SK-N-SH (cell line): ENCODE measurements at regions of chr15 and their contacts with region 1.

Region 1: GRCh38 chr15:77496710-77497103 is 76.0 kb downstream of the HMG20A start:
- DNase-seq: peak; percentile 81
- H3K4me3 ChIP-seq: peak overlapping the region; percentile 15 to 54; a peak in 2 of 4 replicates
- H3K27ac ChIP-seq: peak overlapping the region; percentile 75 to 98
- H3K4me1 ChIP-seq: peaks cover 47 to 49% of the 10 kb centered on the region in 2 experiments
- H3K27me3 ChIP-seq: no peaks in the 10 kb centered on the region
- CTCF ChIP-seq: peak; percentile 92
- EP300 ChIP-seq: 0 out of 4 replicates have a peak, but pooled peaks of 1 of the 2 experiments have one; percentile 6
- RAD21 ChIP-seq: peak; percentile 90

Region 2: DNA sequence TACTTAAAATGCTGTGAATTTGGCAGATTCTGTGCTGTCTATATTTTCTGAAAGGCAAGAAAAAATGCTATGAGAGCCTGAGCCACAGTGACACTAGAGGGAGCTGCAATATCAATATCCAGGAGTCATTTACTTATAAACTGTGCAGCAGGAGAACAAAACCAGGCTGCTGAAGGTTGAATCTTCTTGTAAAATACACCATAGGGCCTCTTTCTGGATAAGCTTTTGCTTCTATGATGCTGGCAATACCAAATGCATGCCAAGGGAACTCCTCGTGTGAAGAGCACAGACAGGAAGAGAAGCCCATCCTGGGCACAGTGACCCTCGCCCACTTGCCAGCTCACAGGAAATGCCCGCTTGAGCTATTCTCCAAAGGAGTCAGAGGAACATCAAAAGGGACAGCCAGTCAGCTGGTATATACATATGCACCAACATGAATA is 377.8 kb before region 1 on chr15:
- CTCF ChIA-PET with region 1: interaction called, 69 read pairs
- POLR2A ChIA-PET with region 1: no interaction called
- DNase-seq: peak; percentile 55
- H3K4me3 ChIP-seq: no peak overlapping the region
- H3K27ac ChIP-seq: peak overlapping the region in 1 of 2 experiments; percentile 45; a peak in 3 of 4 replicates
- H3K4me1 ChIP-seq: peaks cover 3 to 5% of the 10 kb centered on the region in 2 experiments
- H3K27me3 ChIP-seq: no peaks in the 10 kb centered on the region
- CTCF ChIP-seq: peak; percentile 86
- EP300 ChIP-seq: no peak
- RAD21 ChIP-seq: peak; percentile 94

Region 3: DNA sequence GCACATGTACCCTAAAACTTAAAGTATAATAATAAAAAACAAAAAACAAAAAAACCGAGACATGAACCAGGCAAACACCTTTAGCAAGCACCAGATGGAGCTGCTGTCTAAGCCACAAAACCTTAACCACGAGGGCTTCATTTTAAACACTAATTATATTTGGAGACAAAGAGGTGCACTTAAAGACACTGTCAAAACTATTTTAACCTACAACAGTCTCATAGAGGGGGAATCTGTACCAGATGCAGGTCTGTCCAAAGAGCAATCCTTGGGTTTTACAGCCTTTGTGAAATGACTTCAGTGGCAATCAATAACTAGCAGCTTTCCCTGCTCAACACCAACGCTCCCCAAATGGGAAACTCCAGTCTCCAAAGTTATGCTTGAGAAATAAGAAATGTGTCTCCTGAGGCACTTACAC is 310.1 kb before region 1 on chr15:
- CTCF ChIA-PET with region 1: interaction called, 49 read pairs
- POLR2A ChIA-PET with region 1: no interaction called
- DNase-seq: peak; percentile 33
- H3K4me3 ChIP-seq: no peak overlapping the region; a peak in 1 of 4 replicates
- H3K27ac ChIP-seq: no peak overlapping the region; a peak in 1 of 4 replicates
- H3K4me1 ChIP-seq: peaks cover 11 to 26% of the 10 kb centered on the region in 2 experiments; a peak in 3 of 4 replicates
- H3K27me3 ChIP-seq: no peaks in the 10 kb centered on the region
- CTCF ChIP-seq: peak; percentile 66
- EP300 ChIP-seq: no peak
- RAD21 ChIP-seq: peak; percentile 84

Region 4: GRCh38 chr15:77476995-77477394 is 19.7 kb before region 1 on chr15:
- CTCF ChIA-PET with region 1: interaction called, 16 read pairs
- POLR2A ChIA-PET with region 1: no interaction called
- DNase-seq: no peak
- H3K4me3 ChIP-seq: peak overlapping the region in 1 of 2 experiments; percentile 16; a peak in 1 of 4 replicates
- H3K27ac ChIP-seq: no peak overlapping the region
- H3K4me1 ChIP-seq: peaks cover 4 to 19% of the 10 kb centered on the region in 2 experiments; a peak in 3 of 4 replicates
- H3K27me3 ChIP-seq: no peaks in the 10 kb centered on the region
- CTCF ChIP-seq: no peak
- EP300 ChIP-seq: no peak
- RAD21 ChIP-seq: no peak

Region 5: GRCh38 chr15:77507911-77508310 is 11.2 kb after region 1 on chr15:
- CTCF ChIA-PET with region 1: interaction called, 14 read pairs
- POLR2A ChIA-PET with region 1: no interaction called
- DNase-seq: no peak
- H3K4me3 ChIP-seq: no peak overlapping the region
- H3K27ac ChIP-seq: peak overlapping the region in 1 of 2 experiments; percentile 15; a peak in 1 of 4 replicates
- H3K4me1 ChIP-seq: peaks cover 16 to 20% of the 10 kb centered on the region in 2 experiments; a peak in 2 of 4 replicates
- H3K27me3 ChIP-seq: no peaks in the 10 kb centered on the region
- CTCF ChIP-seq: no peak
- EP300 ChIP-seq: no peak
- RAD21 ChIP-seq: no peak

Region 6: DNA sequence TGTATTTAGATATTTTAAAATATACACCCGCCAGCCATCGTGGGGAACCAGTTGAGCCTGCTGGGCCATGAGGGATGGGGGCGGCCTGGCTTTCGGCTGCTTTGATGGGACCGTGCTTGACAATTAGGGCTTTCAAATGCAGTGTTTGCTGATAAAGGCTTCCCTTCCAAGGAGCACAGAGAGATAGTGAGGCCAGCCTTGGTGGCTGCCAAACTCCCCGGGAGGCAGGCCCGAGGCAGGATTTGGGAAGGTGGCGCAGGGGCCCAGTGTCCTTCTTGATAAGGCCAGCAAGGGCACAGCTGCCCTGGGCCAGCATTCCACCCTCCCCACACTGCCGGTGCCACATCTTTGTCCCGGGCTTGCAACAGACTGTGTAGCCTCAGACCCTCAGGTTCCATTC is 60.4 kb after region 1 on chr15:
- CTCF ChIA-PET with region 1: no interaction called
- POLR2A ChIA-PET with region 1: no interaction called
- DNase-seq: no peak
- H3K4me3 ChIP-seq: no peak overlapping the region
- H3K27ac ChIP-seq: no peak overlapping the region
- H3K4me1 ChIP-seq: peaks cover 0 to 11% of the 10 kb centered on the region in 2 experiments; a peak in 1 of 4 replicates
- H3K27me3 ChIP-seq: no peaks in the 10 kb centered on the region
- CTCF ChIP-seq: no peak
- EP300 ChIP-seq: no peak
- RAD21 ChIP-seq: no peak

Region 7: DNA sequence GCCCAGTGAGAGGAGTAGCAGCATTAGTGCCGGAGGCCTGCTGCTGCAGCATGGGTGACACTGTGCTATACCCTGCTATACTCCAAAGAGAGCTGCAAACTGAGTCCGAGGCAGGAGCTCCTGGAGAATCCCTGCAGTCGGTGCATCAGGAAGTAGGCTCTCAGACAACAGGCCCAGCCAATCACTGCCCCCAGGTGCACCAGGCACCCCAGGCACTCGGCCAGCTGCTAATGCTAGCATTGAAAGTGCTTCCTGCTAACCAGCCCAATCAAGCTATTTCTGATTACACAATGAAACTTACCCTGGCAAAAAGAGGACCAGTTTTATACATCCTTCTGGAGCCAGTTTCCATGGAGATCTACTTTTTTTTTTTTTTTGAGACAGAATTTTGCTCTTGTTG is 895.7 kb after region 1 on chr15:
- CTCF ChIA-PET with region 1: no interaction called
- POLR2A ChIA-PET with region 1: no interaction called
- DNase-seq: peak; percentile 73
- H3K4me3 ChIP-seq: no peak overlapping the region
- H3K27ac ChIP-seq: peak overlapping the region in 1 of 2 experiments; percentile 77; a peak in 2 of 4 replicates
- H3K4me1 ChIP-seq: peaks cover 0 to 19% of the 10 kb centered on the region in 2 experiments; a peak in 1 of 4 replicates
- H3K27me3 ChIP-seq: no peaks in the 10 kb centered on the region
- CTCF ChIP-seq: no peak
- EP300 ChIP-seq: peak in 1 of 2 experiments; percentile 12; a peak in 1 of 4 replicates
- RAD21 ChIP-seq: no peak